Mammary epithelial cell (primary cell): ENCODE measurements at regions of chr14 and their contacts with region 1.

Region 1: GRCh38 chr14:78872837-78873236 is 702.7 kb downstream of the NRXN3 start:
- DNase-seq: no peak
- H3K4me3 ChIP-seq: no peak overlapping the region
- H3K27ac ChIP-seq: no peak overlapping the region
- H3K4me1 ChIP-seq: no peaks in the 10 kb centered on the region
- H3K27me3 ChIP-seq: no peaks in the 10 kb centered on the region
- CTCF ChIP-seq: no peak

Region 2: DNA sequence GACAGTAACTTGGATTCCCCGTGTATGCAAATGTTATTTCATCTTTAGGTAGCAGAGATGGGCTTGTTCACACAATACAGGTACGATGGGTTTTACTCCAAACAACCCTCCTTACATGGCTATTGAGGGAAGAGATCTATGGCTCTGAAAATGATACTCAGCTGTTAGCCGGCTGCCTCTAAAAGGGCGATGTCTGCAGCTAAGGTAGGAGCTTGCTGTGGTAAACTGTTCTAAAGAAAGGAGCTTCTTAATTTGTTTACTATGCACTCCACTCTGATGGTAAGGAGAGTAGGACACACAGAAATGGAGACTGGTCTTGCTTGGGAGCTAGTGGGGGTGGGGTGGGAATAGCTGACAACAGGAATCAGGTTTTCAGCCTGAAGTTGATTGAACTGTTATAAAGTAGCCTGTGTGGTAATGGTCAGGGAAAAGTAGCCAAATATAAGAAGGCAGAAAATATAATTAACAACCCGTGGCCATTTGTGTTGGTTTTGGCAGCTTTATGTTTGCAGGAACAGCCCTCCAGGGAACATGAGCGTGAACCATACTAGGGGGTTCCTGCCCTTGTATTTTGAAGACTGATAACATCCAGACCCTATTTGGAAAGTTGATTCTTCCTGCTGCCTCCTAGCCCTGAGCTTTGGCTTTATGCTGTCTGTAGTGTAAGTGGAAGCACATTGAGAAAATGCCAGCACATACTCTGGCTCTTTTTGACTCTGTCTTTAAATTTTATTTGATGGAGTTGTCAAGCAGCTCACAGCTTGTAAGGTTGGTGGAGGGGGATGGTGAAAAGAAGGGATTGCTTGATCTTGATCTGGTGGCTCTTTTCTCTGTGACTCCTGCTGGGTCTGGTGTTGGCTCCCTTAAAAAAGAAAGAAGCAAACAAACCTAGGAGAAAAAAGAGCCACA is 408.7 kb after region 1 on chr14:
- CTCF ChIA-PET with region 1: no interaction called
- dilution Hi-C with region 1: no loop called
- in situ Hi-C with region 1: no loop called
- intact Hi-C with region 1: no loop called
- DNase-seq: no peak
- H3K4me3 ChIP-seq: no peak overlapping the region
- H3K27ac ChIP-seq: no peak overlapping the region
- H3K4me1 ChIP-seq: peaks cover 16% of the 10 kb centered on the region
- H3K27me3 ChIP-seq: peaks cover 10% of the 10 kb centered on the region
- CTCF ChIP-seq: no peak

Region 3: GRCh38 chr14:79568594-79568993 is 695.8 kb after region 1 on chr14:
- CTCF ChIA-PET with region 1: no interaction called
- dilution Hi-C with region 1: no loop called
- in situ Hi-C with region 1: no loop called
- intact Hi-C with region 1: loop called (anchors 5 kb)
- DNase-seq: no peak
- H3K4me3 ChIP-seq: no peak overlapping the region
- H3K27ac ChIP-seq: no peak overlapping the region
- H3K4me1 ChIP-seq: no peaks in the 10 kb centered on the region
- H3K27me3 ChIP-seq: no peaks in the 10 kb centered on the region
- CTCF ChIP-seq: no peak